Heart left ventricle (tissue), 16 donors: ENCODE measurements at regions of chr3 and their contacts with region 1.

Region 1: GRCh38 chr3:16060358-16060852 is 114.1 kb upstream of the GALNT15 start:
- DNase-seq: peak in 1 of 5 donors; percentile 57
- ATAC-seq: peak; percentile 53 to 92 (median 86)
- H3K4me3 ChIP-seq: no peak overlapping the region
- H3K27ac ChIP-seq: peak overlapping the region in 10 of 12 donors; percentile 6 to 86 (median 74)
- H3K4me1 ChIP-seq: peaks cover 0 to 42% (median 28%) of the 10 kb centered on the region in 12 donors
- H3K27me3 ChIP-seq: no peaks in the 10 kb centered on the region
- CTCF ChIP-seq: peak in 2 of 12 donors; percentile 6 to 11
- POLR2A ChIP-seq: no peak

Region 2: GRCh38 chr3:16011376-16011775 is 49.0 kb before region 1 on chr3:
- intact Hi-C with region 1: no loop called
- DNase-seq: no peak
- ATAC-seq: no peak
- H3K4me3 ChIP-seq: no peak overlapping the region
- H3K27ac ChIP-seq: no peak overlapping the region
- H3K4me1 ChIP-seq: no peaks in the 10 kb centered on the region
- H3K27me3 ChIP-seq: no peaks in the 10 kb centered on the region
- CTCF ChIP-seq: no peak
- POLR2A ChIP-seq: no peak

Region 3: GRCh38 chr3:16112910-16113504 is 52.6 kb after region 1 on chr3:
- intact Hi-C with region 1: loop called in 1 of 10 experiments (anchors 5 kb)
- DNase-seq: no peak
- ATAC-seq: peak in 2 of 4 donors; percentile 65 to 80
- H3K4me3 ChIP-seq: no peak overlapping the region
- H3K27ac ChIP-seq: peak overlapping the region in 8 of 12 donors; percentile 2 to 61 (median 21)
- H3K4me1 ChIP-seq: peaks cover 0 to 13% (median 4%) of the 10 kb centered on the region in 12 donors
- H3K27me3 ChIP-seq: no peaks in the 10 kb centered on the region
- CTCF ChIP-seq: no peak
- POLR2A ChIP-seq: no peak

Region 4: DNA sequence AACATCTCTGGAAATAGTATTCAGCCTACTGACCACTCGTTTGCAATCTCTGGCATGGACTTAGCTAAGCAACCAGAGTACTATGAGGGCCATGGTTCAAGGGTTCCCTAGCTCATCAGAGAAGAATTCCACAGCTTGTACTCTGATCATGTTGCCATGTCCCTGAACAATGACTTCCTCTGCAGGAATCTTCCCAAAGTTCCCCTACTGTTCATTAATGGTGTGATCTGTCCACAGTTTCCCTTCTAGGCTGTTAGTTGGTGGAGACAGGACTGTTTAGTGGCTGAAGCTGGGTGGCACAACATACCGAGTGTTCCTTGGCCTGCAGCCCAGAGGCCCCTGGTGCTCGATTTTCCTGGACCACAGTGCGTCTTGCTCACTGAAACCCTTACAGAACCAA is 69.7 kb after region 1 on chr3:
- intact Hi-C with region 1: loop called in 1 of 10 experiments (anchors 5 kb)
- DNase-seq: no peak
- ATAC-seq: peak; percentile 31 to 52 (median 36)
- H3K4me3 ChIP-seq: no peak overlapping the region
- H3K27ac ChIP-seq: peak overlapping the region in 8 of 12 donors; percentile 2 to 52 (median 32)
- H3K4me1 ChIP-seq: peaks cover 0 to 44% (median 26%) of the 10 kb centered on the region in 12 donors
- H3K27me3 ChIP-seq: no peaks in the 10 kb centered on the region
- CTCF ChIP-seq: no peak
- POLR2A ChIP-seq: no peak

Region 5: DNA sequence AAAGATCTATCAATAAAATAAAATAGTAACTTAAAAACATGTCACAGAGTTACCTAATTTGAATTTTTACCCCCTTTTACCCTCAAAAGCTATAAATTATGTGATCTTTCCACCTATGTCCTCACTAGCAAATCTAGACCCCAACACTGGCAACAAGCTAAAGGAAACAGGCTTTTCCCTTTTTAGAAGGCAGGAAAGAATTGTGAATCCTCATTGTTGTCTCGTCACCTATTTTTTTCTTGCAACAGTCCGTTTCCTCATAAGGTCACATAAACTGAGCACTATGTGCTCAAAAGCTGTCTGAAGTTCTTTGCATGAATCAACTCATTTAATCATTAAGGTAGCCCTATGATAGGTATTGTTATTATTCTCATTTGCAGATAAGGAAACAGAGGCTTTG is 579.4 kb after region 1 on chr3:
- intact Hi-C with region 1: no loop called
- DNase-seq: no peak
- ATAC-seq: no peak
- H3K4me3 ChIP-seq: no peak overlapping the region
- H3K27ac ChIP-seq: no peak overlapping the region
- H3K4me1 ChIP-seq: peaks cover 0 to 4% (median 0%) of the 10 kb centered on the region in 12 donors
- H3K27me3 ChIP-seq: no peaks in the 10 kb centered on the region
- CTCF ChIP-seq: no peak
- POLR2A ChIP-seq: no peak